Mucosa of descending colon (tissue), 3 donors: ENCODE measurements at regions of chr2 and their contacts with region 1.

Region 1: DNA sequence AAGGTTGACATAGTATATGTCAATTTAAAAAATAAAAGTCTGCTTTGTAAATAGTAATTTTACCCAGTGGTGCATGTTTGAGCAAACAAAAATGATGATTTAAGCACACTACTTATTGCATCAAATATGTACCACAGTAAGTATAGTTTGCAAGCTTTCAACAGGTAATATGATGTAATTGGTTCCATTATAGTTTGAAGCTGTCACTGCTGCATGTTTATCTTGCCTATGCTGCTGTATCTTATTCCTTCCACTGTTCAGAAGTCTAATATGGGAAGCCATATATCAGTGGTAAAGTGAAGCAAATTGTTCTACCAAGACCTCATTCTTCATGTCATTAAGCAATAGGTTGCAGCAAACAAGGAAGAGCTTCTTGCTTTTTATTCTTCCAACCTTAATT is 78.6 kb upstream of the CSRNP3 start:
- DNase-seq: no peak
- ATAC-seq: no peak
- H3K4me3 ChIP-seq: no peak overlapping the region
- H3K4me1 ChIP-seq: no peaks in the 10 kb centered on the region
- CTCF ChIP-seq: no peak

Region 2: DNA sequence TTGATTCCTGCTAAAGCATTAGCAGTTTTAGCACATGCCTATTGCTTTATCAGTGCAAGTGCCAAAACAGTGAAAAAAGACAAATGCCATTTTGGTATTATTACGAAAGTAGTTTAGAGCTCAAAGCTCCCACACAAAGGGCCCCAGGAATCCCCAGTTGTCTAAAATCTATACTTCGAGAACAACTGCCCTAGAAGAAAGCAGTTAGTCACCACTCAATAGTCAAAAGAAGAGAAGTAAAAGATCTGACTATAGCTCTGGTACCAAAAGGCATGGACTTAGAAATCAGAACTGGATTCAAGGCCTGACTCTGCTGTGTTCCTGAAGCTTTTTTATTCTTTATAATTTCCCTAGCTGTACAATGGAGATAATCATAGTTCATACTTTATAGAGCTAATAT is 208.8 kb before region 1 on chr2:
- intact Hi-C with region 1: no loop called
- DNase-seq: no peak
- ATAC-seq: no peak
- H3K4me3 ChIP-seq: no peak overlapping the region
- H3K4me1 ChIP-seq: no peaks in the 10 kb centered on the region
- CTCF ChIP-seq: no peak

Region 3: GRCh38 chr2:165874445-165875039 is 483.7 kb after region 1 on chr2:
- intact Hi-C with region 1: loop called in 1 of 2 experiments (anchors 10 kb)
- DNase-seq: peak in 1 of 3 donors; percentile 48
- ATAC-seq: peak; percentile 90
- H3K4me3 ChIP-seq: no peak overlapping the region
- H3K4me1 ChIP-seq: peaks cover 4% of the 10 kb centered on the region
- CTCF ChIP-seq: no peak